ENCODE measurements at regions of chr4 and their contacts with region 1.

Region 1: GRCh38 chr4:151015459-151016347 is 619 bp upstream of the LRBA start:
- DNase-seq: peak; percentile 84 to 92 (median 91)
- H3K4me3 ChIP-seq: peak overlapping the region; percentile 81 to 99 (median 95)
- H3K27ac ChIP-seq: peak overlapping the region; percentile 97 to 98
- H3K4me1 ChIP-seq: peaks cover 17 to 44% (median 28%) of the 10 kb centered on the region in 4 experiments
- H3K27me3 ChIP-seq: no peaks in the 10 kb centered on the region

Region 2: DNA sequence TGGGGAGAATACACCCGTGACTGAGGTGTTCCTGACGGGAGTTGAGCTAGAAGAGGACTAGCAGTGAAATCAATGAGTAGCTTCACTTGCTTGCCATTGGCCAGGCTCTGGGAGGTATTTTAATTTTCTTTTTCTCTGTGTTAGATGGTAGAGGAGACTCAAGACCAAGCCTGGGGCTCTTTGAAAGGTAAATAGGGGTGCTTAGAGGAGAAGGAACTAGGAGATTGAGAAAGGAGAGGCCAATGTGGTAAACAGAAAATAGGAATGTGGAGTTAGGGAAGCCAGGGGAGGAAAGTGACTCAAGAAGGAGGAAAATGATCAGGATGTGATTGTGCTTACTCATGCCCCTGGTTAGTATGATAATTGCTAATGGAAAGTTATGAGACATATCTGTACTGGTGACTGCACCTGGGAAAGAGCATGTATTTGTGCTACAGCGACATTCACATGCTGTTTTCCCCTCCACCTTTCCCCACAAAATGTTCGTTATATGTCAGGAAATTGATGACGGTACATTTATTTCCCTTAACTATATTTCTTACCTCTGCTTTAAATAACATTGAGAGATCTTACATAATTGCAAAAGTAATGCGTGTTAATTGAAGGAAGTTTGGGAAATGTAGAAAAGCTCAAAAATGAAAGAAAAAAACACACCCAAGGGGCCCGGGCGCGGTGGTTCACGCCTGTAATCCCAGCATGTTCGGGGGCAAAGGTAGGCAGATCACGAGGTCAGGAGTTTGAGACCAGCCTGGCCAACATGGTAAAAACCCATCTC is 16.3 kb after region 1 on chr4:
- CTCF ChIA-PET with region 1: interaction called, 10 read pairs
- POLR2A ChIA-PET with region 1: interaction called, 14 read pairs
- DNase-seq: peak; percentile 92 to 94 (median 94)
- H3K4me3 ChIP-seq: peak overlapping the region in 5 of 7 experiments; percentile 6 to 65 (median 44)
- H3K27ac ChIP-seq: peak overlapping the region; percentile 94 to 96
- H3K4me1 ChIP-seq: peaks cover 0 to 45% (median 34%) of the 10 kb centered on the region in 4 experiments
- H3K27me3 ChIP-seq: no peaks in the 10 kb centered on the region

Region 3: GRCh38 chr4:151099229-151099975 is 83.7 kb after region 1 on chr4 and contains the start of gene RPS3A:
- CTCF ChIA-PET with region 1: interaction called, 3 read pairs
- POLR2A ChIA-PET with region 1: interaction called, 11 read pairs
- DNase-seq: peak; percentile 99 to 100 (median 99)
- H3K4me3 ChIP-seq: peak within 1 kb of the TSS; percentile 63 to 100 (median 99)
- H3K27ac ChIP-seq: peak within 1 kb of the TSS; percentile 94 to 98
- H3K4me1 ChIP-seq: peaks cover 15 to 44% (median 29%) of the 10 kb centered on the region in 4 experiments
- H3K27me3 ChIP-seq: no peaks in the 10 kb centered on the region

Measured in common myeloid progenitor, CD34-positive (primary cell).